ENCODE measurements at regions of chrX and their contacts with region 1.

Region 1: DNA sequence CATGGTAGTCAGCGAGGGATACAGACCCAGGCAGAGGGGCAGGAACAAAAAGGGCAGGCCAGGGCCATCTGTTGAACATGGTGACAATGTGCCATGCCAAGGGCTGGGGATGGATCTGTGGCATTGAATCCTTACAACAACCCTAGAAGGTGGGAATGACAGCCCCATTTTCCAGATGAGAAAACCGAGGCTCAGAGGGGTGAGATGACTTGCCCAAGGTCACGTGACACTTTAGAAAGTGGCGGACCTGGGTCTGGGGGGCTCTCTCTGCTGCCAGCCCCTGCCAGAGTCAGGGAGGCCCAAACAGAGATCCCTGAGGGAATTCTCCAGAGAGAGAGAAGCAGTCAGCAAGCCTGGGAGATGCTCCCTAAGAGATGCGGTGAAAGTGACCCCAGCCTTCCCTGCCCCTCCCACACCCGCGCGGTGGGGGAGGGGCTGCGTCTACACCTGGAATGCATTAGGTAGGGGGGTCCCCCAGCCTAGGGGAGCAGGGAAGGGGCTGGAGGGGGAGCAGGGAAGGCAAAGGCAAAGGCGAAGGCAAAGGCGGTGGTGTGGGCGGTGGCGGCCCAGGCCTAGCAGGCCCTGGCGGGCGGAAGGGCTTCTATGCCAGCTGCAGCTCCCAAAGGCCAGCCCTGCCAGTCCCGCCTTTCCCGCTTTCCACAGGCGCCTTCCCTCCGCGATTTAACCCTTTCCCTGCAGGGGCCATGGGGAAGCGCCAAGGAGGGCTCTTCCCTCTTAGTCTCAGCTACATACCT is 13.0 kb downstream of the FGD1 start:
- DNase-seq: no peak

Region 2: GRCh38 chrX:54157561-54157960 is 325.5 kb before region 1 on chrX:
- intact Hi-C with region 1: no loop called
- DNase-seq: no peak

Region 3: GRCh38 chrX:54529552-54530357 is 46.7 kb after region 1 on chrX and contains the start of gene GNL3L:
- intact Hi-C with region 1: loop called (anchors 5 kb)
- DNase-seq: peak; percentile 94
- total RNA-seq, gene GNL3L: 35.3 TPM

Measured in cardiac septum (tissue), 1 donor.